ENCODE measurements at regions of chr19 and their contacts with region 1.

Region 1: DNA sequence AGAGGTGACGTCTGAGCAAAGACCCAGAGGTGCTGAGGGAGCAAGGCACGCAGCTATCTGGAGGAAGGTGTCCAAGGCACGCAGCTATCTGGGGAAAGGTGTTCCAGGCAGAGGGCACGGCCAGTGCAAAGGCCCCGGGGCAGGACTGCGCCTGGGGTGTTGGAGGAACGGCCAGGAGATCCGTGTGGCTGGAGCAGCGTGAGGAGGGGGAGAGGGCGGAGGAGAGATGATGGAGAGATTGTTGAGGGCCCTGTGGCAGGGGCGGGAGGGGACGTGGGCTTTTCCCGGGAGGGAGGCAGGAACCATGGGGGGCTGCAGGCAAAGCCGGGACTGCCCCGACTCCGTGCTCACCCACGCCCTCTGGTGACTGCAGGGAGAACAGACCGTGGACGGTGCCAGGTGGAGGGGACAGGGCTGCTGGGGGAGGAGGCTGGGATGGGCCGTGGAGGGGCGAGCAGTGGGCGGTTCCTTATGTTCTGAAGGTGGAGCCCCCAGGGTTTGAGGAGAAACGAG is 13.3 kb upstream of the MISP start:
- DNase-seq: peak; percentile 72 to 92 (median 86)
- ATAC-seq: peak; percentile 92
- H3K4me3 ChIP-seq: no peak overlapping the region
- H3K27ac ChIP-seq: no peak overlapping the region
- H3K4me1 ChIP-seq: peaks cover 0 to 62% of the 10 kb centered on the region in 2 experiments; a peak in 2 of 5 replicates
- H3K27me3 ChIP-seq: no peaks in the 10 kb centered on the region
- CTCF ChIP-seq: peak; percentile 67 to 84 (median 71)
- EP300 ChIP-seq: no peak
- POLR2A ChIP-seq: no peak
- RAD21 ChIP-seq: peak in 1 of 2 experiments; percentile 45; a peak in 2 of 4 replicates

Region 2: DNA sequence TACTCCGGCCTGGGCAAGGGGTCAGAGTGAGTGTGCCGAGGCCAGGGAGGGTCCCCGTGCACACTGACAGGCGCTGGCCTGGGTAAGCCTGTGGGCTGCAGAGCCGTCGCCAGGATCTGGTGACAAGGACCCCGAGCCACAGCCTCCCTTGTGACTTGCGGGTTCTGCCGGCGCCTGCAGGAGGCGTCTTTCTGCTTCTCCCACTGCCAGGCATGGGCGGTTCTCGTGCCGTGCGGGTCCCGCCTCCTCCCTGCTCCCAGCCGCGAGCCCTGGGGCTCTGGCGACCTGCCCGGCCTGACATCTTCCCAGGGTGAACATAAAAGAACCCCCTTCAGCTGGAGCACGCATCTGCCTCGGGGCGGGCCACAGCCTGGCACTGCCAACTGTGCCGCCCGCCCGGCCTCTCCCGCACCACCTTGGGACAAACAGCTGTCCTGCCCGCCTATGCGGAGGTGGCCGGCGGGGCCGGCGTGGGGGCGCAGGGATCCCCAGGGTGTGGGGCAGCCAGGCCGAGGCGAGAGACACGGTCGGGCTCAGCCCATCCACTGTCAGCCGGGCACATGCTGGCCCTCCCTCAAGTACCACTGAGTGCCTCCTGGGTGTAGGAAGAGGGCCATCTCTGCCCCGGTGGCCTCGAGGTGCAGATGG is 149.4 kb before region 1 on chr19:
- CTCF ChIA-PET with region 1: interaction called, 4 read pairs
- POLR2A ChIA-PET with region 1: interaction called, 5 read pairs
- in situ Hi-C with region 1: no loop called
- intact Hi-C with region 1: loop called (anchors 10 kb)
- DNase-seq: peak; percentile 39 to 76 (median 48)
- ATAC-seq: peak; percentile 61
- H3K4me3 ChIP-seq: no peak overlapping the region
- H3K27ac ChIP-seq: no peak overlapping the region
- H3K4me1 ChIP-seq: peaks cover 3 to 89% of the 10 kb centered on the region in 2 experiments; a peak in 3 of 5 replicates
- H3K27me3 ChIP-seq: peaks cover 0 to 13% of the 10 kb centered on the region in 2 experiments; a peak in 2 of 5 replicates
- CTCF ChIP-seq: peak; percentile 54 to 65 (median 64)
- EP300 ChIP-seq: no peak
- POLR2A ChIP-seq: no peak
- RAD21 ChIP-seq: 0 out of 4 replicates have a peak, but pooled peaks of 1 of the 2 experiments have one; percentile 18

Region 3: GRCh38 chr19:656751-657559 is 80.7 kb before region 1 on chr19:
- CTCF ChIA-PET with region 1: no interaction called
- POLR2A ChIA-PET with region 1: no interaction called
- in situ Hi-C with region 1: no loop called
- intact Hi-C with region 1: no loop called
- DNase-seq: no peak
- ATAC-seq: no peak; the same call in 2 of the 3 replicates
- H3K4me3 ChIP-seq: no peak overlapping the region
- H3K27ac ChIP-seq: no peak overlapping the region
- H3K4me1 ChIP-seq: peaks cover 14 to 73% of the 10 kb centered on the region in 2 experiments
- H3K27me3 ChIP-seq: no peaks in the 10 kb centered on the region
- CTCF ChIP-seq: no peak
- EP300 ChIP-seq: no peak
- POLR2A ChIP-seq: no peak
- RAD21 ChIP-seq: no peak

Region 4: DNA sequence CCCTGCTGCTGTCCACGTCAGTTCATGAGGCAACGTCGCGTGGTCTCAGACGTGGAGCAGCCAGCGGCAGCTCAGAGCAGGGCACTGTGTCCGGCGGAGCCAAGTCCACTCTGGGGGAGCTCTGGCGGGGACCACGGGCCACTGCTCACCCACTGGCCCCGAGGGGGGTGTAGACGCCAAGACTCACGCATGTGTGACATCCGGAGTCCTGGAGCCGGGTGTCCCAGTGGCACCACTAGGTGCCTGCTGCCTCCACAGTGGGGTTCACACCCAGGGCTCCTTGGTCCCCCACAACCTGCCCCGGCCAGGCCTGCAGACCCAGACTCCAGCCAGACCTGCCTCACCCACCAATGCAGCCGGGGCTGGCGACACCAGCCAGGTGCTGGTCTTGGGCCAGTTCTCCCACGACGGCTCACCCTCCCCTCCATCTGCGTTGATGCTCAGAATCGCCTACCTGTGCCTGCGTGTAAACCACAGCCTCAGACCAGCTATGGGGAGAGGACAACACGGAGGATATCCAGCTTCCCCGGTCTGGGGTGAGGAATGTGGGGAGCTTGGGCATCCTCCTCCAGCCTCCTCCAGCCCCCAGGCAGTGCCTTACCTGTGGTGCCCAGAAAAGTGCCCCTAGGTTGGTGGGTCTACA is 54.8 kb before region 1 on chr19:
- CTCF ChIA-PET with region 1: no interaction called
- POLR2A ChIA-PET with region 1: no interaction called
- in situ Hi-C with region 1: no loop called
- intact Hi-C with region 1: no loop called
- DNase-seq: no peak
- ATAC-seq: no peak
- H3K4me3 ChIP-seq: no peak overlapping the region
- H3K27ac ChIP-seq: no peak overlapping the region
- H3K4me1 ChIP-seq: peaks cover 5 to 61% of the 10 kb centered on the region in 2 experiments; a peak in 4 of 5 replicates
- H3K27me3 ChIP-seq: no peaks in the 10 kb centered on the region
- CTCF ChIP-seq: no peak
- EP300 ChIP-seq: no peak
- POLR2A ChIP-seq: no peak
- RAD21 ChIP-seq: no peak

Region 5: DNA sequence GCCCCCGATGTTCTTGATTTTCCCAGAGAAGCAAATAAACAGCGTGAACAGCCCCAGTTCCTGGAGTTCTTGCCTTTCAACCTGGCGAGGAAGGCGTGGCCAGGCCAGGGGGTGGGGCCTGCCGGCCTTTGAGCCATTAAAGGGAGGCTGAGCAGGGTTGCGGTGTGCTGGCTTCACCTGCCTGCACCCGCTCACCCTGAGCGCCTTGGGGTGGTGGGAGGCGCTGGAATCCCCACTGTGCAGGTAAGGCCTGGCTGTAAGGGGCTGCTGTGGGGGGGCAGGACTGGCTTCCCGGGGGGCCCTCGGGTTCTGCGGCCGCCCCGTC is 10.6 kb after region 1 on chr19:
- CTCF ChIA-PET with region 1: no interaction called
- POLR2A ChIA-PET with region 1: interaction called, 10 read pairs
- in situ Hi-C with region 1: no loop called
- intact Hi-C with region 1: no loop called
- DNase-seq: peak; percentile 41 to 61 (median 60)
- ATAC-seq: peak; percentile 76
- H3K4me3 ChIP-seq: no peak overlapping the region
- H3K27ac ChIP-seq: no peak overlapping the region
- H3K4me1 ChIP-seq: peaks cover 15 to 64% of the 10 kb centered on the region in 2 experiments; a peak in 4 of 5 replicates
- H3K27me3 ChIP-seq: no peaks in the 10 kb centered on the region
- CTCF ChIP-seq: no peak
- EP300 ChIP-seq: no peak
- POLR2A ChIP-seq: no peak
- RAD21 ChIP-seq: no peak

Region 6: GRCh38 chr19:813359-814257 is 76.0 kb after region 1 on chr19:
- CTCF ChIA-PET with region 1: no interaction called
- POLR2A ChIA-PET with region 1: no interaction called
- in situ Hi-C with region 1: no loop called
- intact Hi-C with region 1: no loop called
- DNase-seq: peak in 1 of 4 experiments; percentile 12
- ATAC-seq: no peak; the same call in 2 of the 3 replicates
- H3K4me3 ChIP-seq: no peak overlapping the region
- H3K27ac ChIP-seq: no peak overlapping the region
- H3K4me1 ChIP-seq: peaks cover 0 to 42% of the 10 kb centered on the region in 2 experiments; a peak in 2 of 5 replicates
- H3K27me3 ChIP-seq: no peaks in the 10 kb centered on the region
- CTCF ChIP-seq: no peak
- EP300 ChIP-seq: no peak
- POLR2A ChIP-seq: peak; percentile 6; the same call in 1 of the 2 replicates
- RAD21 ChIP-seq: no peak